Activated B cell treated with CpG ODN at 0.5 μM for 24 hours (primary cell): ENCODE measurements at regions of chr11 and their contacts with region 1.

Region 1: GRCh38 chr11:77994412-77995362 is at the start of gene INTS4:
- DNase-seq: peak; percentile 90
- ATAC-seq: peak; percentile 96
- H3K4me3 Mint-ChIP-seq: peak within 1 kb of the TSS; percentile 94
- H3K27ac Mint-ChIP-seq: peak within 1 kb of the TSS; percentile 97
- H3K4me1 Mint-ChIP-seq: peaks cover 45% of the 10 kb centered on the region
- H3K27me3 Mint-ChIP-seq: no peaks in the 10 kb centered on the region
- CTCF ChIP-seq: no peak
- total RNA-seq, gene INTS4: 61.8 and 62.3 TPM in 2 replicates

Region 2: DNA sequence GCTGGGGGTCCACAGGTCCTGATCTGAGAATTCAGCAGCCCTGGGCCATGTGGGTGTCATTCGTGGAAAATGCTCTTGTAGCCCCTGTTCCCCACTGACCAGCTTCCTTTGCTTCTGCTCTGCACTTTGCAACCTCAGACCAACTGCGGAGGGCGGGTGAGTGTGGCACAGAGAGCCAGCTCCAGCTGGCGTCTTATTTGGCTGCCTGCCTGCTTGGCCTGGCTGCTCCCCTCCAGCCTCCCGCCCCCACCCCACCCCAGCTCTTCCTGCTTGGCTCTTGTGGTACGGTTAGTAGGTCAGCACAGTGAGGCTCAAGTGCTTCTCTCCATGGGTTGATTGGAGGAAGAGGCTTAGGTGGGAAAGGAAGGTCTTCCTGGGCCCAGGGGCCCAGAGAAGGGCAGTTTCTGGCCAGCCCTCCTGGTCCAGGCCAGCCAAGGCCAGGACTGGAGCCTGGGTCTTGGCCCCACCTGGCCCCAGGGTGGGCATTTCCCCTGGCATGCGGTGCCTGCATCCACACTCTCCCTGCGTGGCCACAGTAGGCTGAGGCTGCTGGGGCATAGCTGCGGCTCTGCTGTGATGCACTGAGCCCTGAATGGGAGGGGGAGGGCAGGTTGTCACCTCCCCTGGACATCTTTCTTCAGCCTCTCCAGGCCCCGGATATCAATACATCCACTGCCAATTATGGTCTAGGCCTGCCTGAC is 840.2 kb before region 1 on chr11:
- CTCF ChIA-PET with region 1: no interaction called
- POLR2A ChIA-PET with region 1: no interaction called
- intact Hi-C with region 1: no loop called
- DNase-seq: no peak
- ATAC-seq: no peak
- H3K4me3 Mint-ChIP-seq: no peak overlapping the region
- H3K27ac Mint-ChIP-seq: no peak overlapping the region
- H3K4me1 Mint-ChIP-seq: peaks cover 9% of the 10 kb centered on the region
- H3K27me3 Mint-ChIP-seq: peaks cover 11% of the 10 kb centered on the region
- CTCF ChIP-seq: no peak

Region 3: DNA sequence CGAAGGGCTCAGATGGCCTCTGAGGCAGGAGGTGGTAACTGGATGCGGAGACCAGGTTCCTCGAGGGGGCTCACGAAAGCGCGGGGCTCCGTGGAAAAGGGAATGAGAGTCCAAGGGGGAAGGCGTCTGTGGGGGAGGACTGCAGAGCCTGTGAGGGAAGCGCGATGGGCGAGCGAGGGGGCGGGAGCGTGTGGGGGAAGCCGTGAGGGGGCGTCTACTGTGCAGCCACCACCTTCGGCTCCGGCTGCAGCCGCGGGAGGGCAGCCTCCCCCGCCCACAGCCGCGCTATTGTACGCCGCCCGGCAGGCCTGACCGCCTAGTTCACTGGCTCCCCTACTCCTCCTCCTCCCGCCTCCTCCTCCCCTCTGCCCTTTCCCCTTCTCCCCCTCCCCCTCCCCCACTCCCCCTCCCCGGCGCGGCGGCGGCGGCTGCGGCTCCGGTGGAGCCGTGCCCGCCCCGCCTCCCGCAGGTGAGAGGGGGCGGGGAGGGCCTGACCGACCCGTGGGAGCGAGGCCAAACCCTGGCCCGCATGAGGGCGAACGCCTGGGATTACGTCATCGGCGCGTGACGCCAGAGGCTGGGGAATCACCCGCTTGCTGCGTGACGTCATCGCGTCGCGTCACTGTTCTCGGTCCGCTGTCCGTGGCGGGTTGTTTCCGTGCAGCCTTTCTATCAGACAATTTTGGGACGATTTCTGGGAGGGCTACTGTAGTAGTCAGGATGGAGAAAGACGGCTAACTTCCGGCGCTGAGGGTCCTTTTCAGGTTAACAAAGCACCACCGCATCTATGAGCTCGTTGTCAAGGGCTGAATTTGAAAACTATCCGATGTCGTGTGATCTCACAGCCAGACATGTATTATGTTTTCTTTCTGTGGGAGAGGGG is 520.6 kb before region 1 on chr11 and contains the start of gene PAK1:
- CTCF ChIA-PET with region 1: no interaction called
- POLR2A ChIA-PET with region 1: no interaction called
- intact Hi-C with region 1: loop called (anchors 10 kb)
- DNase-seq: peak; percentile 81
- ATAC-seq: peak; percentile 79
- H3K4me3 Mint-ChIP-seq: peak within 1 kb of the TSS; percentile 88
- H3K27ac Mint-ChIP-seq: peak within 1 kb of the TSS; percentile 89
- H3K4me1 Mint-ChIP-seq: peaks cover 18% of the 10 kb centered on the region
- H3K27me3 Mint-ChIP-seq: peaks cover 6% of the 10 kb centered on the region
- CTCF ChIP-seq: no peak
- total RNA-seq, gene PAK1: 20.2 and 21.1 TPM in 2 replicates

Region 4: GRCh38 chr11:77820563-77821348 is 173.9 kb before region 1 on chr11 and contains the starts of genes AAMDC and RSF1:
- CTCF ChIA-PET with region 1: interaction called, 3 read pairs
- POLR2A ChIA-PET with region 1: interaction called, 23 read pairs
- intact Hi-C with region 1: loop called (anchors 1 kb)
- DNase-seq: peak; percentile 85
- ATAC-seq: peak; percentile 82
- H3K4me3 Mint-ChIP-seq: peak within 1 kb of the TSS; percentile 97
- H3K27ac Mint-ChIP-seq: peak within 1 kb of the TSS; percentile 93
- H3K4me1 Mint-ChIP-seq: peaks cover 36% of the 10 kb centered on the region
- H3K27me3 Mint-ChIP-seq: no peaks in the 10 kb centered on the region
- CTCF ChIP-seq: no peak
- total RNA-seq, gene AAMDC: 3.8 and 4.4 TPM in 2 replicates
- total RNA-seq, gene RSF1: 65.9 and 68.8 TPM in 2 replicates

Region 5: DNA sequence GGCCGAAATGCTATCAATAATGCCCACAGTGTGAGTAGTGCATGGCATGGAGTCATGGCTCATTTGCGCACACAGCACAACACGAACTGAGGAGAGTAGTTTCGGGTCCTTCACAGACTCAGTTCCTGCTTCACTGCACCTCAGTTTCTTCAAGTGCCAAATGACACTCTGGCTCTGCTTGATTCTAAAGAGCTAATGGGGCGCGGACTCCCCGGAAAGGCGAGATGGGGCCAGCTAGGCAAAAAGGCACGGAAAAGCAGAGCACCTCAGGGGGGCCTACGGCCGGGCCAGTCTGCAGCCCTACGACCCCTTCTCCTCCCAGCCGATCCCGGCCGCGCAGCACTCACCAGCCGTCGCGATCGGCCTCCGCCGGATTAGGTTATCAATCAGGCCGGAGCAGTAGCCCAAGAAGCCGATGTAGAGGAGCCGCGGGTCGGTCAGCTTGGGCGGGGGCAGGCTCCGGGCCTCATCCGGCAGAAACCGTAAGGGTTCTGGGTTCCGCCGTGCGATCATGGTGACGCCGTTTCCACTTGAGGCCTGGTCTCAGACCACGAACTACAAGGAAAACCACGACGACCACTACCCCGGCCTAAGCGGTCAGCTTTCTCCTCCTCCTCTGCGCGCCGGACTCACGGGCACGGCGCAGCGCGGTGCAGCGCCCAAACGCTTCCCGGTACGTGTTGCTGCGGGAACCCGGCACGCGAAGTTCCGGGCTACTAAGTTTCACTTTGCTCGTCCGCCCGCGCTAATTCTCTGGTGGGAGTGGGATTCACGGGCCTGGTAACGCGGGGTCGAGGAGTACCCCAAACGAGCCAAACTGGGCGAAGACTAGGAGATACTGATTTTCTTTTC is 84.8 kb after region 1 on chr11 and contains the start of gene NDUFC2:
- CTCF ChIA-PET with region 1: no interaction called
- POLR2A ChIA-PET with region 1: interaction called, 11 read pairs
- intact Hi-C with region 1: loop called (anchors 1 kb)
- DNase-seq: peak; percentile 60
- ATAC-seq: peak; percentile 79
- H3K4me3 Mint-ChIP-seq: peak within 1 kb of the TSS; percentile 93
- H3K27ac Mint-ChIP-seq: peak within 1 kb of the TSS; percentile 86
- H3K4me1 Mint-ChIP-seq: peaks cover 51% of the 10 kb centered on the region
- H3K27me3 Mint-ChIP-seq: no peaks in the 10 kb centered on the region
- CTCF ChIP-seq: no peak
- total RNA-seq, gene NDUFC2: 83.5 and 88.4 TPM in 2 replicates

Region 6: DNA sequence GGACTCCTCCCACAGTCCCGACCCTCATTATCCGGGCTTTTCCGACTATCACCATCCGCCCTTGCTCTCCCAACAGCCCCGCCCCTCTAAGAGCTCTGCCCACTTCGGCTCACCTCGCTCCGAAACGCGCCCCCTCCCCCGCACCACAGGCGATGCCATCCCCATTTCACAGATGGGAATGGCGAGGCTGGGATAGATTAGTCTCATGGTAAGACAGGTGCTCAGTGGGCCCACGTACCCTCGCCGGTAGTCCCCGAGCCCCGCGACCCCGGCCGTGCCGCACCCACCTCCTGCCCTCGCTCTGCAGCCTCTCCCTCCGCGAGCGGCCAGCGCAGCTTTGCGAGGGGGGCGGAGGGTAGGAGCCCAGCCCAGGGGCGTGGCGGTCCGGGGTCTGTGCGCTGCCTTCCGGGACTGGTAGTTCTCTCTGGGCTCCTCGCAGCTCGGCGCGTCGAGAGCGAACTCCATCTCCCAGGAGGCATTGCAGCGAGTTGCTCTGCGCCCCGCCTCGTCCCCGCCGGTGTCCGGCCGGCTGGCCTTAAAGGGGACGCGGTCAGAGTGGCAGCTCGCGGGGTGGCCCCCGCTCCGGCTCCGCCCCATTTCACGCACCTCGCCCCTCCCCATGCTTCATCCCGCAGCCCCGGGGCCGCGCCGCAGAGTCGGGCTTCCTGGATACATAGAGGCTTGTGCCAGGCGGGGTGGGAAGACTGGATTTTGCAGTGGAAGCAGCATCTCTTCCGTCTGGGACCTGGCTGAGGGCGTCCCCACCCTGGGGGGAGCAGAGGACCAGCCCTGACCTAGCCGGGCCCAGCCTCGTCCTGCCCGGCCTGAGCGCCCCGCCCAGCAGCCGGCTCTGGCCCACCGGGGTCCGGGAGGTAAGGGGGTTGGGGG is 193.8 kb after region 1 on chr11 and contains the starts of genes KCTD21 and USP35:
- CTCF ChIA-PET with region 1: no interaction called
- POLR2A ChIA-PET with region 1: interaction called, 13 read pairs
- intact Hi-C with region 1: loop called (anchors 1 kb)
- DNase-seq: peak; percentile 92
- ATAC-seq: peak; percentile 95
- H3K4me3 Mint-ChIP-seq: peak within 1 kb of the TSS; percentile 95
- H3K27ac Mint-ChIP-seq: peak within 1 kb of the TSS; percentile 87
- H3K4me1 Mint-ChIP-seq: peaks cover 36% of the 10 kb centered on the region
- H3K27me3 Mint-ChIP-seq: no peaks in the 10 kb centered on the region
- CTCF ChIP-seq: no peak
- total RNA-seq, gene KCTD21: 3.2 and 3.5 TPM in 2 replicates
- total RNA-seq, gene USP35: 3.5 and 4.9 TPM in 2 replicates

Region 7: GRCh38 chr11:79440441-79441194 is 1445.9 kb after region 1 on chr11 and contains the start of gene TENM4:
- CTCF ChIA-PET with region 1: no interaction called
- POLR2A ChIA-PET with region 1: no interaction called
- intact Hi-C with region 1: loop called (anchors 5 kb)
- DNase-seq: peak; percentile 59
- ATAC-seq: peak; percentile 78
- H3K4me3 Mint-ChIP-seq: peak within 1 kb of the TSS; percentile 84
- H3K27ac Mint-ChIP-seq: peak within 1 kb of the TSS; percentile 87
- H3K4me1 Mint-ChIP-seq: peaks cover 44% of the 10 kb centered on the region
- H3K27me3 Mint-ChIP-seq: peaks cover 32% of the 10 kb centered on the region
- CTCF ChIP-seq: no peak
- total RNA-seq, gene TENM4: 1.9 and 2.4 TPM in 2 replicates